Heart left ventricle (tissue), 16 donors: ENCODE measurements at regions of chr4 and their contacts with region 1.

Region 1: DNA sequence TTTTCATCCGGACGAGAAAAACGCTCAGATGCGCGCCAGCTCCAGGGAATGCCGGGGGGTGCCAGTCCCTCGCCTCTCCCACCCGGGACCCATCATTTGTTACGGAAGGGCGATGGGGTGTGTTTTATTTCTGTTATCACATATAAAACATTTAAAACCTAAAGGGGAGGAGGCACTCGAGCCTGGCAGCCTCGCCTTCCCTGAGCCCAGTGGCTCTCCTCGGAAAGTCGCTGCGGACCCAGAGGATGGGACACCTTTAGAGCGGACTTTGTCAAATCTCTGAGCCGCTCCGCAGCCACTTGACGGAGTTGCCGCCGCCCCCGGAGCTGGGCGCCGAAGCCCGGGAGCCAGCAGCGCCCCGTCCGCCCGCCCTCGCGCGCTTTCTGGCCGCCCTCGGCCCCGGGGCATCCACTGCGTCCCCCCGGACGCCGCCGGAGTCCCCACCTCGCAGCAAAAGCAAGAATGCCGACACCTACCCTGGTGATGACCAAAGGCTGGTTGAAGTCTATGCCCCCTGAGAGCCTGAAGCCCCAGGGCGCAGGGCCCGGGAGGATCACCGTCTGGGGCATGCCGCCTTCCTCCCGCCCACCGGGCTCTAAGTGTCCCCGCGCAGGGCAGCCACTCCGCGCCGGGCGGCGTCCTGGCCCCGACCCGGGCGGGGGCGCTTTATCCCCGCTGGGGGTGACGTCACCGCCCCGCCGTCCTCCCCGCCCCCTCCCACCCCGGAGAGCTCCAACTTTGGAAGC is at the start of gene PDLIM3:
- DNase-seq: peak; percentile 55 to 87 (median 83)
- ATAC-seq: peak; percentile 51 to 89 (median 80)
- H3K4me3 ChIP-seq: peak within 1 kb of the TSS; percentile 67 to 98 (median 84)
- H3K27ac ChIP-seq: peak within 1 kb of the TSS; percentile 84 to 99 (median 97)
- H3K4me1 ChIP-seq: peaks cover 0 to 38% (median 5%) of the 10 kb centered on the region in 12 donors
- H3K27me3 ChIP-seq: peaks cover 0 to 24% (median 0%) of the 10 kb centered on the region in 9 donors
- CTCF ChIP-seq: peak in 1 of 12 donors; percentile 20
- POLR2A ChIP-seq: peak; percentile 93 to 99
- total RNA-seq, gene PDLIM3: 111 to 1,156 (median 246) TPM

Region 2: DNA sequence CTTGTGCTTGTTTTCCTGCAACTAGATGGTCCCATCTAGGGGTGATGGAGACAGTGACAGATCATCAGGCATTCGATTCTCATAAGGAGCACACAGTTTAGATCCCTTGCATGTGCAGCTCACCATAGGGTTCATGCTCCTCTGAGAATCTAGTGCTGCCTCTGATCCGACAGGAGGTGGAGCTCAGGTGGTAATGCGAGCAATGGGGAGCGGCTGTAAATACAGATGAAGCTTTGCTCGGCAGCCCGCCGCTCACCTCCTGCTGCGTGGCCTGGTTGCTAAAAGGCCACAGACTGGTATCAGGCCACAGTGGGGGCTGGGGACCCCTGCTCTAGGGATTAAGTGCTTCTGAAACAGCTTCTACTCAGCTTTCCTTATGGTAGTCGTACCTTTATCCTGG is 35.0 kb before region 1 on chr4:
- intact Hi-C with region 1: no loop called
- DNase-seq: no peak
- ATAC-seq: peak in 1 of 4 donors; percentile 2
- H3K4me3 ChIP-seq: no peak overlapping the region
- H3K27ac ChIP-seq: peak overlapping the region in 1 of 12 donors; percentile 22
- H3K4me1 ChIP-seq: peaks cover 0 to 6% (median 0%) of the 10 kb centered on the region in 12 donors
- H3K27me3 ChIP-seq: no peaks in the 10 kb centered on the region
- CTCF ChIP-seq: no peak
- POLR2A ChIP-seq: no peak

Region 3: GRCh38 chr4:185566972-185567371 is 31.9 kb after region 1 on chr4:
- intact Hi-C with region 1: loop called in 7 of 10 experiments (anchors 2 to 5 kb)
- DNase-seq: peak in 4 of 5 donors; percentile 52 to 62 (median 59)
- ATAC-seq: peak; percentile 82 to 84 (median 82)
- H3K4me3 ChIP-seq: peak overlapping the region in 2 of 12 donors; percentile 7 to 28
- H3K27ac ChIP-seq: peak overlapping the region; percentile 83 to 98 (median 90)
- H3K4me1 ChIP-seq: peaks cover 3 to 55% (median 25%) of the 10 kb centered on the region in 12 donors
- H3K27me3 ChIP-seq: no peaks in the 10 kb centered on the region
- CTCF ChIP-seq: no peak
- POLR2A ChIP-seq: no peak

Region 4: GRCh38 chr4:185587427-185588161 is 52.6 kb after region 1 on chr4:
- intact Hi-C with region 1: loop called in 4 of 10 experiments (anchors 2 to 10 kb)
- DNase-seq: peak in 2 of 5 donors; percentile 31 to 84
- ATAC-seq: peak in 3 of 4 donors; percentile 36 to 64 (median 40)
- H3K4me3 ChIP-seq: peak overlapping the region in 1 of 12 donors; percentile 23
- H3K27ac ChIP-seq: peak overlapping the region in 8 of 12 donors; percentile 3 to 88 (median 42)
- H3K4me1 ChIP-seq: peaks cover 0 to 22% (median 5%) of the 10 kb centered on the region in 12 donors
- H3K27me3 ChIP-seq: peaks cover 0 to 9% (median 0%) of the 10 kb centered on the region in 9 donors
- CTCF ChIP-seq: no peak
- POLR2A ChIP-seq: no peak